A549 (cell line): ENCODE measurements at regions of chr16 and their contacts with region 1.

Region 1: GRCh38 chr16:57757326-57757786 is 21.8 kb downstream of the KATNB1 start:
- DNase-seq: peak; percentile 83 to 89
- ATAC-seq: peak; percentile 36 to 83
- H3K4me3 ChIP-seq: no peak overlapping the region
- H3K27ac ChIP-seq: peak overlapping the region; percentile 69 to 92
- H3K4me1 ChIP-seq: peaks cover 76% of the 10 kb centered on the region
- CTCF ChIP-seq: peak; percentile 88
- EP300 ChIP-seq: no peak
- POLR2A ChIP-seq: no peak
- RAD21 ChIP-seq: peak; percentile 83 to 90

Region 2: DNA sequence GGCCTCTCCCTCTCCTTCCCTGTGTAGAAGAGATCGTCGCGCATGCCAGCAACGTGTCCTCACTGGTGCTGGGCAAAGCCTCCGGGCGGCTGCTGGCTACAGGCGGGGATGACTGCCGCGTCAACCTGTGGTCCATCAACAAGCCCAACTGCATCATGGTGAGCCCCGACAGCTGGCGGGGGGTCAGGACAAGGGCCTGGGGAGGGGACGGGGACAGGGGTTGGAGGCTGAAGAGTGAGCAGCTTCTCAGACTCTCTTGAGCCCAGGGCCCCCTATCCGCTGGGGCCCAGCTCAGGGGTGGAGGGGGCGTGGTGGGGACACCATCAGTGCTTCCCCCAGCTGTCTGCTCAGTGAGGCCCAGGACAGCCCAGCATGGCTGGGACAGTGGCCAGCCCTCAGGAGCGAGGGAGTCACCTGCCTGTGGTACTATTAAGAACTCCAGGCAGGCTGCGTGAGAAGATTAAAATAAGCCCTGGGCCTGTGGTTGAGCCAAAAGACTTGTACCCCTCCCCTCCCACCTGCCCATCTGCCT is 15.6 kb before region 1 on chr16:
- CTCF ChIA-PET with region 1: interaction called, 46 read pairs
- POLR2A ChIA-PET with region 1: no interaction called
- DNase-seq: no peak
- ATAC-seq: no peak
- H3K4me3 ChIP-seq: no peak overlapping the region
- H3K27ac ChIP-seq: no peak overlapping the region
- H3K4me1 ChIP-seq: peaks cover 8% of the 10 kb centered on the region
- CTCF ChIP-seq: no peak
- EP300 ChIP-seq: no peak
- POLR2A ChIP-seq: no peak
- RAD21 ChIP-seq: no peak

Region 3: GRCh38 chr16:57795431-57795878 is 38.1 kb after region 1 on chr16:
- CTCF ChIA-PET with region 1: interaction called, 44 read pairs
- POLR2A ChIA-PET with region 1: no interaction called
- DNase-seq: peak; percentile 79 to 89
- ATAC-seq: peak; percentile 33 to 51; a peak in 5 of 6 replicates
- H3K4me3 ChIP-seq: peak overlapping the region; percentile 53
- H3K27ac ChIP-seq: peak overlapping the region; percentile 91 to 100
- H3K4me1 ChIP-seq: peaks cover 55% of the 10 kb centered on the region
- CTCF ChIP-seq: peak; percentile 51
- EP300 ChIP-seq: no peak
- POLR2A ChIP-seq: no peak
- RAD21 ChIP-seq: peak; percentile 57 to 62

Region 4: DNA sequence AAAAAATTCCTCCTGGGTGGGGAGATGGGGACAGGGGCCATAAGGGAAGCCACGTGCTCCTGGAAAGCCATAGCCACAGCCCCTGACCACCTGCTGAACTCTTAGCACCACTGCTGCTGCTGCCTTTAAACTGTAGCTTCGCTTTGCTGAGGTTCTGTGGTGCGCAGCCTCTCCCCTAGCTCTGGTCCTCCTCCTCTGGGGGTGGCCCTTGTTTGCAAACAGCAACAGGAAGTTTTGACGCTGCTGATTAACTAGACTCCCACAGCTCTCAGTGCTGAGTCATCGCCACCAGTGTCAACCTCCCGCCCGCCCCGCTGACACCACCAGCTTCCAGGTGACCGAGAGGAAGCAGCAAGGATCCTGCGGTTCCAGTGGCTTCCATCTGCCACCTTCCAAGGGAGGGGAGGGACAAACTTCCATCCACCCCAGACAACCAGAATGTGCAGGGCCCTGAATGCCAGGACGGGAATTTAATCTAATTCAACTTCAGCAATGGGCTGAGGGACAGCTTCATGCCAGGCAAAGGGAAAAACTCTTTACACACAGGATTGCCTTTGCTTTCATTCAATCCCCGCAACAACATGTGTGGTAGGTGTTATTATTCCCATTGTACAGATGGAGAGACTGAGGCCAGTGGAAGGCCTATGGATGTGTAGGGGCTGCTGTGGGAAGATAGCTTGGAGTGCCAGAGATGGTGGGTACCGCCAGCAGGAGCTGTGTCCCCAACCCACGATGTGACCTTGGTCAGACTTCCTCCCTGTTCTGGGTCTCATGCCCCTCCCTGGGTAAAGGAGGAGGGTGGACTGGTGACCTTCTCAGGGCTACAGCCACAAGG is 53.1 kb after region 1 on chr16:
- CTCF ChIA-PET with region 1: interaction called, 24 read pairs
- POLR2A ChIA-PET with region 1: interaction called, 8 read pairs
- DNase-seq: peak; percentile 94 to 98
- ATAC-seq: peak; percentile 71 to 81
- H3K4me3 ChIP-seq: peak overlapping the region; percentile 4; the same call in 1 of the 3 replicates
- H3K27ac ChIP-seq: peak overlapping the region; percentile 91 to 97
- H3K4me1 ChIP-seq: peaks cover 84% of the 10 kb centered on the region
- CTCF ChIP-seq: no peak
- EP300 ChIP-seq: peak; percentile 90 to 91
- POLR2A ChIP-seq: peak; percentile 56
- RAD21 ChIP-seq: peak; percentile 3 to 51; a peak in 3 of 5 replicates

Region 5: DNA sequence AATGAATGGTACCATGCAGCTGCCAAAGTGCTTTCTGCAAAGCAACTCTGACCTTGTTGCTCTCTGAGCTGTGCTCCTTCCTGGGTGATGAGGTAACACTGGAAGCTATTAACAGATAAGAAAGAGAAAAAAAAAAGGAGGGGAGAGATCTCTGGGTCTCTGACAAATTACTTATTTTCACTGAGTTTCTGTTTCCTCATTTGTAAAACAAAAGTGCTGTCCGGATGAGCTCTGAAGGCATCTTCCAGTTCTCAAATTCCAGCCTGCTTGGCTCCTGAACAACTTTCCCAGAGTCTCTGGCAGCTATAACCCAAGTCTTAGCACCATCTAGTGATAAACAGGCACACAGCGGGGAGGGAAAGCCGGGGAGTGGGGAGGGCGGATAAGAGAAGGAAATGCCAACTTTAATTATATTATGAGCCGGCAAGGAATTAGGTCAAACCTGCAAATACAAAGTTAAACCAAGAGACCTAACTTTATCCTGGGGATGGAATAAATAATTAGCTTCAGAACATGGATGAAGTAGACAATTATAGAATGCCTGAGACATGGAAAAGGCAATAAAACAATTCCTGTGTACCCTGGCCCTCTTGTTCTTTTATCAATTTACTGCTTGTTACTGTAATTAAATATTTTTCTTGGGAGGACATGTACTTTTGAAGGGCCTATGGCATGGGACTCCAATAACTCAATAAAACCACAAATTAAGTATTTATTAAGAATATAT is 106.2 kb after region 1 on chr16:
- CTCF ChIA-PET with region 1: interaction called, 33 read pairs
- POLR2A ChIA-PET with region 1: no interaction called
- DNase-seq: peak; percentile 65 to 86
- ATAC-seq: peak; percentile 89 to 90
- H3K4me3 ChIP-seq: peak overlapping the region; percentile 51
- H3K27ac ChIP-seq: peak overlapping the region; percentile 93 to 95
- H3K4me1 ChIP-seq: peaks cover 83% of the 10 kb centered on the region
- CTCF ChIP-seq: peak; percentile 72
- EP300 ChIP-seq: no peak
- POLR2A ChIP-seq: no peak
- RAD21 ChIP-seq: peak; percentile 88 to 89

Region 6: GRCh38 chr16:58000706-58001676 is 243.6 kb after region 1 on chr16 and contains the start of gene USB1:
- CTCF ChIA-PET with region 1: interaction called, 42 read pairs
- POLR2A ChIA-PET with region 1: no interaction called
- DNase-seq: peak; percentile 91 to 97
- ATAC-seq: peak; percentile 84 to 93
- H3K4me3 ChIP-seq: peak within 1 kb of the TSS; percentile 99
- H3K27ac ChIP-seq: peak within 1 kb of the TSS; percentile 98
- H3K4me1 ChIP-seq: peaks cover 41% of the 10 kb centered on the region
- CTCF ChIP-seq: peak; percentile 77
- EP300 ChIP-seq: no peak
- POLR2A ChIP-seq: peak; percentile 90
- RAD21 ChIP-seq: peak; percentile 48 to 89; a peak in 4 of 5 replicates
- polyA plus RNA-seq, gene USB1: 88.2 and 88.8 TPM in 2 replicates